ENCODE measurements at regions of chr2 and their contacts with region 1.

Region 1: GRCh38 chr2:197042739-197043196 is 116.3 kb upstream of the PGAP1 start:
- DNase-seq: no peak
- ATAC-seq: no peak
- H3K4me3 Mint-ChIP-seq: no peak overlapping the region
- H3K27ac Mint-ChIP-seq: no peak overlapping the region
- H3K4me1 Mint-ChIP-seq: peaks cover 9% of the 10 kb centered on the region
- H3K27me3 Mint-ChIP-seq: no peaks in the 10 kb centered on the region
- CTCF ChIP-seq: no peak

Region 2: DNA sequence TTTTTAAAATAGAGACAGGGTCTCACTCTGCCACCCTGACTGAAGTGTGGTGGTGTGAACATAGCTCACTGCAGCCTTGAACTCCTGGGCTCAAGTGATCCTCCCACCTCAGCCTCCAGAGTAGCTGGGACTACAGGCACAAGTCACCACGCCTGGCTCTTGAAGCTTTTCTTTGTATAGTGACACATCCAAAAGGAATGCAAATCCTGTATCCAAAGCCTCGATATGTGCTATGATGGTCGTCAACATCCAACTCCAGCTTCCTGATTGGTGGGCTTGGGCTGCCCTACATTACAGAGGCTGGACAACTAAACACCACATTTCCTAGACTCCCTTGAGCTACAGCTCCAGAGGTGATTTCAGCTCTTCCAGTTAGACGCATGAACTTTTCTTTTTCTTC is 14.5 kb before region 1 on chr2:
- CTCF ChIA-PET with region 1: no interaction called
- POLR2A ChIA-PET with region 1: interaction called, 10 read pairs
- intact Hi-C with region 1: no loop called
- DNase-seq: no peak
- ATAC-seq: no peak
- H3K4me3 Mint-ChIP-seq: no peak overlapping the region
- H3K27ac Mint-ChIP-seq: no peak overlapping the region
- H3K4me1 Mint-ChIP-seq: peaks cover 3% of the 10 kb centered on the region
- H3K27me3 Mint-ChIP-seq: no peaks in the 10 kb centered on the region
- CTCF ChIP-seq: no peak

Region 3: DNA sequence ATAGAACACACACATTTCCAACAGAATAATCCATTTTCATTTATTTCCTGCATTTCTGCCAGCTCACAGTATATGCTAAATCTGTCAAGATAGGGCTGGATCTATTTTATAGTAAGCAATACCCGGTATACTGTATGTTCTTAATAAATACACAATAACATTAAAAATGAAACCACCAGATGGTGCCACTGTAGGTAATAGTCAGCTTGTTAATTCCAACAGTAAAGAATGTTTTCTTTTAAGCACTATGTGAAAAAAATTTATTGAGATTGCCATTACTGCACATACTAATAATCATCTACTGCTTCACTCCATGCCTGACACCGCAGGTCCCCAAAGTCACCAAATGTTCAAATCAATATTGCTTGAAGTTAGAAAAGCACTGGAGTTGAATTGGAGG is 15.2 kb after region 1 on chr2:
- CTCF ChIA-PET with region 1: no interaction called
- POLR2A ChIA-PET with region 1: no interaction called
- intact Hi-C with region 1: loop called (anchors 2 kb)
- DNase-seq: no peak
- ATAC-seq: no peak
- H3K4me3 Mint-ChIP-seq: no peak overlapping the region
- H3K27ac Mint-ChIP-seq: no peak overlapping the region
- H3K4me1 Mint-ChIP-seq: peaks cover 4% of the 10 kb centered on the region
- H3K27me3 Mint-ChIP-seq: no peaks in the 10 kb centered on the region
- CTCF ChIP-seq: no peak

Measured in activated B cell treated with CpG ODN at 0.5 μM for 24 hours (primary cell).